ENCODE measurements at regions of chr20 and their contacts with region 1.

Region 1: GRCh38 chr20:59032023-59032712 is at the start of gene ATP5F1E:
- DNase-seq: peak; percentile 97 to 98
- ATAC-seq: peak; percentile 95 to 99 (median 95)
- H3K4me3 ChIP-seq: peak within 1 kb of the TSS; percentile 81
- H3K4me3 Mint-ChIP-seq: peak within 1 kb of the TSS; percentile 95
- H3K27ac ChIP-seq: peak within 1 kb of the TSS; percentile 85
- H3K27ac Mint-ChIP-seq: peak within 1 kb of the TSS; percentile 91 to 93
- H3K4me1 ChIP-seq: peaks cover 17% of the 10 kb centered on the region
- H3K4me1 Mint-ChIP-seq: peaks cover 45 to 49% of the 10 kb centered on the region in 2 donors
- H3K27me3 ChIP-seq: no peaks in the 10 kb centered on the region
- H3K27me3 Mint-ChIP-seq: no peaks in the 10 kb centered on the region
- CTCF ChIP-seq: no peak
- total RNA-seq, gene ATP5F1E: 45.9 to 58.0 (median 50.8) TPM

Region 2: GRCh38 chr20:58907399-58908137 is 124.6 kb before region 1 on chr20:
- intact Hi-C with region 1: loop called (anchors 1 kb)
- DNase-seq: peak; percentile 64 to 86
- ATAC-seq: peak; percentile 86 to 89 (median 89)
- H3K4me3 ChIP-seq: peak overlapping the region; percentile 8
- H3K4me3 Mint-ChIP-seq: peak overlapping the region; percentile 88
- H3K27ac ChIP-seq: peak overlapping the region; percentile 80
- H3K27ac Mint-ChIP-seq: peak overlapping the region; percentile 89 to 96
- H3K4me1 ChIP-seq: peaks cover 29% of the 10 kb centered on the region
- H3K4me1 Mint-ChIP-seq: peaks cover 42 to 47% of the 10 kb centered on the region in 2 donors
- H3K27me3 ChIP-seq: no peaks in the 10 kb centered on the region
- H3K27me3 Mint-ChIP-seq: no peaks in the 10 kb centered on the region
- CTCF ChIP-seq: no peak

Region 3: DNA sequence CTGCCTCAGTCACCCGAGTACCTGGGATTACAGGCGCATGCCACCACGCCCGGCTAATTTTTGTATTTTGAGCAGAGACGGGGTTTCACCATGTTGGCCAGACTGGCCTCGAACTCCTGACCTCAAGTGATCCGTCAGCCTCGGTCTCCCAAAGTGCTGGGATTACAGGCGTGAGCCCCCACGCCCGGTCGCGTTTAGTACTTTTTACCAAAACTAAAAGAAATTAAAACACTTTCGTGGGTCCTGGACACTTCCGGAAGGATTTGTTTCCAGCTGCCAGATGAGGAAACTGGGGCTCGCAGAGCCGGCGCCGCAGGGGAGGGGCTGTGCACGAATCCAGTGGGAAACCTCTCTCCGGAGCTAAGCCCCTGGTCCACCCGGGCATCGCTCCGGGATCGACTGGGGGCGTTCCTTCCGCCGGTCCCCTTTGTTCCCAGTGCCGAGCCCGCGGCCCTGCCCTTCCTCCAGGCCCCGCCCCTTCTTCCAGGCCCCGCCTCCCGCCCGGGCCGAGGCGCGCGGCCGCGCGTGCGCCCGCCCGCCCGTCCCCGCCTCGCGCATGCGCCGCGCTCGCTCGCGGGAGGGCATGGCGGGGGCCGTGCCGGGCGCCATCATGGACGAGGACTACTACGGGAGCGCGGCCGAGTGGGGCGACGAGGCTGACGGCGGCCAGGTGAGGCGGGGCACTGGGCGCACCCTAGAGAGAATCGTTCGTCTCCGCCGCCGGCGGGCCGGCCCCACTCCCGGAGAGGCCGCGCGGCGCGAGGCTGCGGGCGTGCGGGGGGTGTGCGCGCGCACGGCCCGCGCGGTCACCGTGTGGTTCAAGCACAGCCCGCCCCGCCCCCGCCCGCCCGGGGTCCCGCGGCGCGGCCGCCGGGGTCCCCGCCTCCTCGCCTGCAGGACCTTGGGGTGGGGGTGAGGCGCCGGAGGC is 51.2 kb before region 1 on chr20 and contains the start of gene NELFCD:
- intact Hi-C with region 1: loop called (anchors 1 kb)
- DNase-seq: peak; percentile 87 to 95
- ATAC-seq: peak; percentile 86 to 94 (median 87)
- H3K4me3 ChIP-seq: peak within 1 kb of the TSS; percentile 89
- H3K4me3 Mint-ChIP-seq: peak within 1 kb of the TSS; percentile 77
- H3K27ac ChIP-seq: peak within 1 kb of the TSS; percentile 66
- H3K27ac Mint-ChIP-seq: peak within 1 kb of the TSS; percentile 70 to 87
- H3K4me1 ChIP-seq: peaks cover 33% of the 10 kb centered on the region
- H3K4me1 Mint-ChIP-seq: peaks cover 21 to 29% of the 10 kb centered on the region in 2 donors
- H3K27me3 ChIP-seq: no peaks in the 10 kb centered on the region
- H3K27me3 Mint-ChIP-seq: no peaks in the 10 kb centered on the region
- CTCF ChIP-seq: no peak
- total RNA-seq, gene NELFCD: 75.7 to 105 (median 92.6) TPM

Region 4: DNA sequence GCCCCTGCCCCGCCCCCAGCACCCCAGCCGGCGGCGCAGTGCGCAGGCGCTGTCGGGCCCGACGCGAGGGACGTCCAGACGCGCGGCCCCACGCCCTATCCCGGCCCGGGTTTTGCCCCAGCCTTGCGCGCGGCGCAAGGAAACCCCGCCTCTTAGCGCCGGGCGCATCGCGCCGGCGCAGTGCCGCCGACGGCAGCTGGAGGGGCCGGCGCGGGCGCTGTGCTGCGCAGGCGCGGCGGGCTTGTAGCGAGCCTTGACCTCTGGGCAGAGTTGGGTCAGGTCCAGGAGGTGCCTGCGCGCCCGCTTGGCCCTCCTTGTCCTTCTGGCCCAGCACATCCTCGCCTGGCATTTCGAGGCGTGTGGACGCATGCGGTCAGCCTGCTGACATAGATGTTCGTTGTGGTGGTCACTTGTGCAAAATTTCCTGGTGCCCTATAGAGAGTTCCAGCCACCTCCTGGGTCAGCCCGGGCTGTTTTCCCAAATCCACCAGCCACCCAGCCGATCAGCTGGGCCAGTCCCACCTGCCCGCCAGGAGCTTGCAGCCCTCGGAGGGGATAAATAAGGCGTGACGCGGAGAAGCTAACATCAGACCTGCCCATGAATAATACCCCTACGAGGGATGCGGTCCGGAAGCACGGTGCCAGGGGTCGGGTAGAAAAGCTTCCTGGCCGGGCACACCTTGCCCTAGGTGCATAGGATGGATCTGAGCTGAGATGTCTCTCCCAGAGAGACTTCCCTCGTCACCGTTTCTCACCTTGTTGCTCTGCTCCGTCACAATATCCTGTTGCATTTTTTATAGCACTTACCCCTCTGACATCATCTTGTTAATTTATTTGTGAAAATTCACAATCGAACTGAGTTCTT is 10.9 kb after region 1 on chr20:
- intact Hi-C with region 1: loop called (anchors 1 kb)
- DNase-seq: peak; percentile 93 to 97
- ATAC-seq: peak; percentile 93 to 99 (median 96)
- H3K4me3 ChIP-seq: peak overlapping the region; percentile 70
- H3K4me3 Mint-ChIP-seq: peak overlapping the region; percentile 91
- H3K27ac ChIP-seq: peak overlapping the region; percentile 85
- H3K27ac Mint-ChIP-seq: peak overlapping the region; percentile 84 to 87
- H3K4me1 ChIP-seq: peaks cover 28% of the 10 kb centered on the region
- H3K4me1 Mint-ChIP-seq: peaks cover 33 to 35% of the 10 kb centered on the region in 2 donors
- H3K27me3 ChIP-seq: no peaks in the 10 kb centered on the region
- H3K27me3 Mint-ChIP-seq: peaks cover 0 to 3% of the 10 kb centered on the region in 2 donors
- CTCF ChIP-seq: no peak

Measured in natural killer cell (primary cell).